ENCODE measurements at regions of chr17 and their contacts with region 1.

Region 1: DNA sequence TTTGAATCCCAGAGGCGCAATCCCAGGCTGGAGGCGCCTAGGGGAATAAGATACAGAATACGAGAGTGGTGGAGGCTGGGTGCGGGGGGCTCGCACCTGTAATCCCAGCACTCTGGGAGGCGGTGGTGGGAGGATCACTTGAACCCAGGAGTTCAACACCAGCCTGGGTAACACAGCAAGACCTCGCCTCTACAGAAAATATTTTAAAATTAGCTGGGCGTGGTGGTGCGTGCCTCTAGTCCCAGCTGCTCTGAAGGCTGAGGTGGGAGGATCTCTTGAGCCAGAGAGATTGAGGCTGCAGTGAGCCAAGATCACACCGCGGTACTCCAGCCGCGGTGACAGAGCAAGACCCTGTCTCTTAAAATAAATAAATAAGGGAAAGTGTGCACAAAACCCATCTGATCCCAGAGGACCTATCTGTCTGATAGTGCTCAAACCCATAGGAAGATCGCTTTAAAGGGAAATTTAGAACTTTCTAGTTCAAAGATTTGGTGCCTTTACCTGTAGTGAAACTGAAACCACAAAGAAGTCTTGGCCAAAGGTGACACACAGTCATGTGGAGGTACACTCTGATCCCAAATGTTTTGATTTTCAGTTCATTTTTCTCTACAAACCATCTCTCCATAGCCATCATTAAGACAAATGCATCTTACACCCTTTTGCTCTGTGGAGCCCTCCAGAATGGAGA is 675 bp upstream of the SCRN2 start:
- DNase-seq: no peak
- ATAC-seq: no peak

Region 2: DNA sequence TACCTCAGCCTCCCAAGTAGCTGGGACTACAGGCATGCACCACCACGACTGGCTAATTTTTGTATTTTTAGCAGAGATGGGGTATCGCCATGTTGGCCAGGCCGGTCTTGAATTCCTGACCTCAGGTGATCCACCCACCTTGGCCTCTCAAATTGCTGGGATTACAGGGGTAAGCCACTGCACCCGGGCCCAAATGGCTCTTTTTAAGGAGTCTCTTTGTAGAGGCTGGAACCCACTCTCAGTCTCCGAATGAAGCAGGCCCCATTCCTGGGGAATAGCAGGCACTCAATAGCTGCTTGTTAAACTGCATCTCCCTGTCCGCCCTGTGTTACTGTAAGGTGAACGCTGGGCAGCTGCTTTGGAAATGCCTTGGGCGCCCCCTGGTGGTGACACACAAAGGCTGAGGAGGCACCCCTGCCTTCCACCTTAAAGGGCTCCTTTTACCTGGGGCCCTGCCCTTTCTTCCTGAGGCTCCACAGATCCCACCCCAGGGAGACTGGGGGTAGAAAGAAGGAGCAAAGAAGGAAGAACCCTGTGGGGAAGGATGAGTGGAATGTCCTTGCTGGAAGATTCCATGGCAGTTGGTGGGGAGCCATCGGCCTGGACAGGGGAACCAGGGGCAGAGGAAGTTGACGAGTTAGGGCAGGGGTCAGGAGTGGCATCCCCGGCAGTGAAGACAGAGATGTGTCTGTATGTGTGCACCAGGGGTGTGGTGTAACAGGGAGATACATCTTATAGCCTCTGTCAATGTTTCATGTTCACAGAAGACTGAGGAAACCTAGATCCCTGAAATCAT is 48.2 kb after region 1 on chr17:
- intact Hi-C with region 1: loop called (anchors 2 kb)
- DNase-seq: peak; percentile 93
- ATAC-seq: peak; percentile 92

Region 3: DNA sequence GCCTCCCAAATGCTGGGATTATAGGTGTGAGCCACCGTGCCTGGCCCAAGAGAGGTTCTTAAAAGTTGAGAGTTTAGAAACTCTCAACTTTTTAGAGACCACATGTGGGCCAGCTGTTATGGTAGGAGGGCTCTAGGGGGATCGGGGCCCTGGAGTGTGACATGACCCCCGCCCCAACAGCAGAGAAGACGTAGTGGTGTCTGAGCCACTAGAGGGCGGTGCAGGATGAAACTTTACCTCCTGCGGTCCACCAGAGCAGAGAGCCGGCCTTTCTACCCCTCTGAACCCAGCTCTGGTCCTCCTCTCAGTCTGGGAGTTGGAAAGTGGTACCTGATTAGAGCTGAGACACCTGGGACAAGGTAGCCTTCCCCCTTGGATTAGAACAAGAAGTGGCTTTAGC is 136.6 kb after region 1 on chr17:
- intact Hi-C with region 1: no loop called
- DNase-seq: peak; percentile 68
- ATAC-seq: peak; percentile 74